CD4-positive, alpha-beta T cell (primary cell): ENCODE measurements at regions of chr18 and their contacts with region 1.

Region 1: DNA sequence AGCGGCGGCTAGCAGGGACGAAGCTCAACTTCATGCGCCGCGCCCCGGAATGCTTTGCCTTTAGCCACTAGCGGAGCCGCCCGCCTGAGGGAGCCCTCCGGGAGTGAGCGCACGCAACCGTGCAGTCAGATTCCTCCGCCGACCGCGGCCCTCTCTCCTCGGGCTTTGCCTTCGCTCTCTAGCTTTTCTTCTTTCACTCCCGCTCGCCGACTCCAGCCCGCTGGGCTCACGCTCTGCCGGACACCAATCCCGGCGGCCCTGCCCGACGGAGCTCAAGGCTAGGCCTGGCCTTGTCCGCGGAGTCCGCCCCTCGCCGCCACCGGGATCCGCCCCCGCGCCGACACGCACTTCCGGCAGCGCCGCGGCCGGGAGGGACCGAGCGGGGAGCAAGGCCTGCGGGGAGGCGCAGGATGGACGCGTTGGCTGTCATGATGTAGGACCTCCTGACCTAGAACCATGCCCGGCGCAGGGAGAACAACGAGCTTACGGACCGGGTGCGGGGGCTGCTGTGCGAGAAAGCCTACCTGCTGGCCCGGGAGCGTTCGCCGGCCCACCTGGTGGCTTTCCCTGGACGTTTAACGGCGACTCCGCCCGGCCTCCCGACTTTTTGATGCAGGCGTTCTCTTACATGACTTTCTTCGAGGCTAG is 40.8 kb upstream of the AKAIN1 start:
- DNase-seq: peak; percentile 74 to 92 (median 84)
- ATAC-seq: peak; percentile 86
- H3K4me3 ChIP-seq: peak overlapping the region; percentile 82
- H3K4me3 Mint-ChIP-seq: peak overlapping the region; percentile 94
- H3K27ac ChIP-seq: peak overlapping the region; percentile 94 to 97
- H3K27ac Mint-ChIP-seq: peak overlapping the region; percentile 99
- H3K4me1 ChIP-seq: peaks cover 25% of the 10 kb centered on the region
- H3K4me1 Mint-ChIP-seq: peaks cover 68% of the 10 kb centered on the region
- H3K27me3 ChIP-seq: no peaks in the 10 kb centered on the region
- H3K27me3 Mint-ChIP-seq: peaks cover 6% of the 10 kb centered on the region
- CTCF ChIP-seq: peak; percentile 53

Region 2: DNA sequence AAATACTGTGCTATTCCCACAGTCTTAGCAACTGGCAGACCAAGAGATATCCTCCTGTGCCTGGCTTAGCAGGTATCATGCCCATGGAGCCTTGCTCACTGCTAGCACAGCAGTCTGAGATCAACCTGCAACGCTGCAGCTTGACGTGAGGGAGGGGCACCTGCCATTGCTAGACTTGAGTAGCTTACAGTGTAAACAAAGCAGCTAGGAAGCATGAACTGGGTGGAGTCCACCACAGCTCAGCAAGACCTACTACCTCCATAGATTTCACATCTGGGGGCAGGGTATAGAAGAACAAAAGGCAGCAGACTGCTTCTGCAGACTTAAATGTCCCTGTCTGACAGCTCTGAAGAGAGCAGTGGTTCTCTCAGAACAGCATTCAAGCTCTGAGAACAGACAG is 115.6 kb before region 1 on chr18:
- CTCF ChIA-PET with region 1: no interaction called
- POLR2A ChIA-PET with region 1: interaction called, 18 read pairs
- intact Hi-C with region 1: no loop called
- DNase-seq: peak in 5 of 14 experiments; percentile 5 to 20 (median 18)
- ATAC-seq: peak; percentile 91
- H3K4me3 ChIP-seq: no peak overlapping the region
- H3K4me3 Mint-ChIP-seq: no peak overlapping the region
- H3K27ac ChIP-seq: no peak overlapping the region
- H3K27ac Mint-ChIP-seq: peak overlapping the region; percentile 70
- H3K4me1 ChIP-seq: peaks cover 7% of the 10 kb centered on the region
- H3K4me1 Mint-ChIP-seq: peaks cover 10% of the 10 kb centered on the region
- H3K27me3 ChIP-seq: no peaks in the 10 kb centered on the region
- H3K27me3 Mint-ChIP-seq: no peaks in the 10 kb centered on the region
- CTCF ChIP-seq: no peak

Region 3: GRCh38 chr18:5167831-5168230 is 70.0 kb before region 1 on chr18:
- CTCF ChIA-PET with region 1: no interaction called
- POLR2A ChIA-PET with region 1: interaction called, 7 read pairs
- intact Hi-C with region 1: loop called in 1 of 2 experiments (anchors 5 kb)
- DNase-seq: peak in 4 of 14 experiments; percentile 4 to 42 (median 24)
- ATAC-seq: peak; percentile 55
- H3K4me3 ChIP-seq: no peak overlapping the region
- H3K4me3 Mint-ChIP-seq: peak overlapping the region; percentile 69
- H3K27ac ChIP-seq: peak overlapping the region in 1 of 2 donors; percentile 10
- H3K27ac Mint-ChIP-seq: peak overlapping the region; percentile 87
- H3K4me1 ChIP-seq: peaks cover 13% of the 10 kb centered on the region
- H3K4me1 Mint-ChIP-seq: peaks cover 39% of the 10 kb centered on the region
- H3K27me3 ChIP-seq: no peaks in the 10 kb centered on the region
- H3K27me3 Mint-ChIP-seq: no peaks in the 10 kb centered on the region
- CTCF ChIP-seq: no peak

Region 4: DNA sequence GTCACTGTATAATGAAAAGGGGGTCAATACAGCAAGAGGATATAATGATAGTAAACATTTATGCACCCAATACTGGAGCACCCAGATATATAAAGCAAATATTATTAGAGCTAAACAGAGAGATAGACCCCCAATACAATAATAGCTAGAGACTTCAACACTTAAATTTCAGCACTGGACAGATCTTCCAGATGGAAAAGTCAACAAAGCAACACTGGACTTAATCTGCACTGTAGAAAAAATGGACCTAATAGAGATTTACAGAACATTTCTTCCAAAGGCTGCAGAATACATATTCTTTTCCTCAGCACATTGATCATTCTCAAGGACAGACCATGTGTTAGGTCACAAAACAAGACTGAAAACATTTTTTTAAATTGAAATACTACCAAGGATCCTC is 31.0 kb after region 1 on chr18:
- CTCF ChIA-PET with region 1: no interaction called
- POLR2A ChIA-PET with region 1: no interaction called
- intact Hi-C with region 1: no loop called
- DNase-seq: no peak
- ATAC-seq: no peak
- H3K4me3 ChIP-seq: no peak overlapping the region
- H3K4me3 Mint-ChIP-seq: no peak overlapping the region
- H3K27ac ChIP-seq: no peak overlapping the region
- H3K27ac Mint-ChIP-seq: no peak overlapping the region
- H3K4me1 ChIP-seq: no peaks in the 10 kb centered on the region
- H3K4me1 Mint-ChIP-seq: no peaks in the 10 kb centered on the region
- H3K27me3 ChIP-seq: no peaks in the 10 kb centered on the region
- H3K27me3 Mint-ChIP-seq: peaks cover 20% of the 10 kb centered on the region
- CTCF ChIP-seq: no peak

Region 5: DNA sequence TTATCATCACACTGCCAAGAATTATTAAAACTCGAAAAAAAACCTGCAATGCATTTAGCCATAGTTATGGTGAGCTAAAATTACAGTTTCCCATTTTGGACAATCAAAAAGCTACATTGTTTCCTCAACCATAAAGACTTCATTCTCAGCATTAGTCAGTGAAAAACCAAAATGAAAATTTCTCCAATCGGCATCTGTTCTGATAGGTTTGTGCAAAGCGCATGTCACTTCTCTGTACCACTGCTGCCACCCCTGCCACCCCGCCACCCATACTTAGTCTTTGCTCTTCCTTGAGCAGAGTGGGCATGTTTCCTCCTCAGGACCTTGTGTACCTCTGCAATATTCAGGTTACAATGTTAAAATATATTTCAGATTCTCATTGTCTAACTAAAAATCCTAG is 64.8 kb after region 1 on chr18:
- CTCF ChIA-PET with region 1: no interaction called
- POLR2A ChIA-PET with region 1: interaction called, 459 read pairs
- intact Hi-C with region 1: no loop called
- DNase-seq: no peak
- ATAC-seq: no peak
- H3K4me3 ChIP-seq: no peak overlapping the region
- H3K4me3 Mint-ChIP-seq: no peak overlapping the region
- H3K27ac ChIP-seq: no peak overlapping the region
- H3K27ac Mint-ChIP-seq: no peak overlapping the region
- H3K4me1 ChIP-seq: peaks cover under 1% of the 10 kb centered on the region
- H3K4me1 Mint-ChIP-seq: peaks cover 2% of the 10 kb centered on the region
- H3K27me3 ChIP-seq: peaks cover 3 to 4% of the 10 kb centered on the region in 2 experiments
- H3K27me3 Mint-ChIP-seq: peaks cover 26% of the 10 kb centered on the region
- CTCF ChIP-seq: no peak

Region 6: DNA sequence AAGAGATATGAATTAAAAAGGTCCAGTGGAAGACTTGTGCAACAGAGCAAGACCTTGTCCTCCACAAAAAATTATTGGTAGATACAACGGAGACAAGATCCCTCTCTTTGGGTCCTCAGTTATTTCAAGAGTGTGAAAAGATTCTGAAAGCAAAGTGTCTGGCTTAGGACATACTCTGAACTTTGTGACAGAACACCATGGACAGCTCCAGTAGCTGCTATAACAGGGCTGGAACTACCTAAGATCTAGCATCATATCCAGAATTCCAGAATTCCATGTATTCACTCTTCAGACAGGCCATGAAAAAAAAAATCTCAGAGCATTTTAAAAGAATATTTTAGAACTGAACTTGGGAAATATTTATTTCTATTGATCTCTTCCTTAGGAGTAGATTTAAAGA is 132.5 kb after region 1 on chr18:
- CTCF ChIA-PET with region 1: no interaction called
- POLR2A ChIA-PET with region 1: no interaction called
- intact Hi-C with region 1: no loop called
- DNase-seq: no peak
- ATAC-seq: no peak
- H3K4me3 ChIP-seq: no peak overlapping the region
- H3K4me3 Mint-ChIP-seq: no peak overlapping the region
- H3K27ac ChIP-seq: no peak overlapping the region
- H3K27ac Mint-ChIP-seq: no peak overlapping the region
- H3K4me1 ChIP-seq: no peaks in the 10 kb centered on the region
- H3K4me1 Mint-ChIP-seq: no peaks in the 10 kb centered on the region
- H3K27me3 ChIP-seq: no peaks in the 10 kb centered on the region
- H3K27me3 Mint-ChIP-seq: peaks cover 48% of the 10 kb centered on the region
- CTCF ChIP-seq: no peak